PC-3 (cell line): ENCODE measurements at regions of chr1 and their contacts with region 1.

Region 1: GRCh38 chr1:89843281-89844121 is 22.7 kb downstream of the LRRC8D start:
- DNase-seq: peak; percentile 67
- ATAC-seq: peak; percentile 91
- H3K4me3 ChIP-seq: peak overlapping the region; percentile 90
- H3K27ac ChIP-seq: peak overlapping the region; percentile 58
- H3K4me1 ChIP-seq: peaks cover 16% of the 10 kb centered on the region
- H3K27me3 ChIP-seq: no peaks in the 10 kb centered on the region
- CTCF ChIP-seq: peak; percentile 69

Region 2: GRCh38 chr1:89454845-89455521 is 388.5 kb before region 1 on chr1:
- CTCF ChIA-PET with region 1: no interaction called
- POLR2A ChIA-PET with region 1: no interaction called
- intact Hi-C with region 1: no loop called
- DNase-seq: peak; percentile 81
- ATAC-seq: peak; percentile 89
- H3K4me3 ChIP-seq: peak overlapping the region; percentile 10; the same call in 1 of the 2 replicates
- H3K27ac ChIP-seq: no peak overlapping the region
- H3K4me1 ChIP-seq: peaks cover 8% of the 10 kb centered on the region
- H3K27me3 ChIP-seq: no peaks in the 10 kb centered on the region
- CTCF ChIP-seq: peak; percentile 70

Region 3: GRCh38 chr1:89820422-89821321 is 22.8 kb before region 1 on chr1 and contains the start of gene LRRC8D:
- CTCF ChIA-PET with region 1: interaction called, 7 read pairs
- POLR2A ChIA-PET with region 1: interaction called, 3 read pairs
- intact Hi-C with region 1: loop called (anchors 1 kb)
- DNase-seq: peak; percentile 82
- ATAC-seq: peak; percentile 94
- H3K4me3 ChIP-seq: peak within 1 kb of the TSS; percentile 95
- H3K27ac ChIP-seq: no peak within 1 kb of the TSS
- H3K4me1 ChIP-seq: peaks cover 16% of the 10 kb centered on the region; the same call in 1 of the 2 replicates
- H3K27me3 ChIP-seq: no peaks in the 10 kb centered on the region
- CTCF ChIP-seq: no peak
- total RNA-seq, gene LRRC8D: 19.6 and 21.8 TPM in 2 replicates

Region 4: DNA sequence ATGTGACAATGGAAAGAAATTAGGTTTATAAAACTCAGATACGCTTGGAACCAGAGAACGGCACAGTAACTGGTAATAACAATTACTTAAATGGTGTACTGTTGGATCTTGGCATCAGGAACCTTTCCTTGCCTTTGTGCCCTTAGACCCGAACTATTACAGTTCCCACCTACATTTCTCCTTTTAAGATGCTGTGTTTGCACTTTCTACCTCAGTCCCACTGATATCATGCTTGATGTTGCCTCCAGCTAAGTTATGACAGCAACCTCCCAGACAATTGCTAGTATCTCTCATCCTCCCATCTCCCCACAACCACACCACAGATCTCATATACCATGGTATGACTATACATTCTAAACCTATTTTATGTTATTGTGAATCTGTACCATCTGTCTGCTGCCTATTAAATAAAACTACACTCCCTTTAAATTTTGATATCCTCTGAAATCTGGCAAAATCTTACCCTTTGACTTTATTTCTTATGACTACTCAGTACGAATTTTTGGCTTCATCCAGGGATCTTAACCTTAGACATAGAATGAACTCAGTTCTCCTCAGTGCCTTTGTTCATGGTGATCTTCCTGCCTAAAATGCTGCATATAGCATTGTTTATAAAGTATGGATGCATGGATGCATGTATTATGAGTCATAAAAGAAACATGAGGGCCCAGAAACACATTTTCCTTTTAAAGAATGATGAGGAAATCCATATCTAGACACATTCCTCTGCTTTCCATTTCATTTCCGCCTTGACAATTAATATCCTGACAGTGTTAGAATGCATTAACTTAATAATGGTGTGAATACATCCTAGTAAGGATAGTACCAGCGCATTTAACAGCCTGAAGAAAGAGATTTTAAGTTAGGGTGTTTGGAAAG is 41.5 kb after region 1 on chr1:
- CTCF ChIA-PET with region 1: interaction called, 4 read pairs
- POLR2A ChIA-PET with region 1: no interaction called
- intact Hi-C with region 1: loop called (anchors 5 kb)
- DNase-seq: peak; percentile 64
- ATAC-seq: peak; percentile 38
- H3K4me3 ChIP-seq: no peak overlapping the region
- H3K27ac ChIP-seq: peak overlapping the region; percentile 12
- H3K4me1 ChIP-seq: peaks cover 38% of the 10 kb centered on the region
- H3K27me3 ChIP-seq: no peaks in the 10 kb centered on the region
- CTCF ChIP-seq: no peak

Region 5: DNA sequence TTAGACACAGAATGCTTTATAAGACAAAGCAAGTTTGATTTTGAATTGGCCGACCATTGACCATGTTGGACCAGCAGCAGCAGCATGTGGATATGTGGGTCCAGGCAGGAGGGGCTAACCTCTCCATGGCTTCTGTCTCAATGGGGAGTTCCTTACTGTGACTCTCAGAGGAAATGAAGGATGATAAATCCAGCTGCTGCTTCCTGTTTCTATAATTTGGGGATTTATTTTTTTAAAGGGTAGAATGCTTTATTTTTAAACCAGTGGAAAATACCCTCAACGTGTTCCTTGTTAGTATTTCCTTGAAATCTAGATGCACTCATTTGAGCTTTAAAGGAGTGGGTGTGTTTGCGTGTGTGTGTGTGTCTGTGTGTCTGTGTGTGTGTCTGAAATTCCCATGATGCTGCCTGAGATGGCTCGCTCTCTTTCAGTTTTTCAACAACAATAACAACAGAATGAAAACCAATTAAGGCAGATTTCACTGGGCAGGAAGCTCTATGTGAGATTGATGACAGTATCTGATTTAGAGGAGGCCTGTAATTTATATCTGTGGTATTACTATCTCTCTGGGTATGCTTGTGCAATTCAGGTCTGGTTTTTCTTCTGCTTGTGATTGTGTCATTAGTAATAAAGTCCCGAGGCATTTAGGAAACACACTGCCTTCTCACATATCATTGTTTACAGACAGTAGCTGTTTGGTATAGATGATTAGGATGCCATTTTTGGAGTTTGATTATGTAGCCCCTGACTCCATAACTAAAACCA is 65.4 kb after region 1 on chr1:
- CTCF ChIA-PET with region 1: no interaction called
- POLR2A ChIA-PET with region 1: no interaction called
- intact Hi-C with region 1: loop called (anchors 5 kb)
- DNase-seq: peak; percentile 63
- ATAC-seq: no peak
- H3K4me3 ChIP-seq: no peak overlapping the region
- H3K27ac ChIP-seq: peak overlapping the region; percentile 89
- H3K4me1 ChIP-seq: peaks cover 53% of the 10 kb centered on the region
- H3K27me3 ChIP-seq: no peaks in the 10 kb centered on the region
- CTCF ChIP-seq: no peak

Region 6: DNA sequence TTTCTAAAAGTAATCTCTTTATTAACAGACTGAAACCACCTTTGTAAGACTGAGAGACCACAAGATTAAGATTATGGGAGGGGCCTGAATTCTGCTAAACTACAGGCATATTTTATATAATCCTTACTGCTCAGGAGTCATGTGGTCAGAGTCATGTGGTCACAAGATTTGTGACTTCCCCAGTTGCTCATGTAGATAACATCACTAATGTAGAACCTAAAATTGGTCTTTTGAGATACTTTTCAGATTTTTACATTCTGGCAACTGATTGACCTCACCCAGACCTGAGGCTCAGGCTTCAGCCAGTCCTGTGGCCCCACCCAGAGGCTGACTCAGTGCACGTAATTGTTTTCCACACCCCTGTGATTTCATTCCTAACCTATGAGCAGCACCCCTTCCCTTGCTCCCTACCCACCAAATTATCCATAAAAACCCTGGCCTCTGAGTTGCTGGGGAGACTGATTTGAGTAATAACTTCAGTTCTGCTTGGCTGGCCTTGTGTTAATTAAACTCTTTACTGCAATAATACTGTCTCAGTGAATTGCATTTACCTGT is 109.6 kb after region 1 on chr1:
- CTCF ChIA-PET with region 1: no interaction called
- POLR2A ChIA-PET with region 1: interaction called, 7 read pairs
- intact Hi-C with region 1: loop called (anchors 2 kb)
- DNase-seq: peak; percentile 95
- ATAC-seq: peak; percentile 96
- H3K4me3 ChIP-seq: no peak overlapping the region
- H3K27ac ChIP-seq: peak overlapping the region; percentile 78
- H3K4me1 ChIP-seq: peaks cover 39% of the 10 kb centered on the region
- H3K27me3 ChIP-seq: no peaks in the 10 kb centered on the region
- CTCF ChIP-seq: peak; percentile 34; the same call in 1 of the 2 replicates